Right ventricle myocardium inferior (tissue), 1 donor: ENCODE measurements at regions of chr10 and their contacts with region 1.

Region 1: GRCh38 chr10:102132563-102133372 is at the start of gene PPRC1:
- DNase-seq: peak; percentile 100
- ATAC-seq: peak; percentile 97
- total RNA-seq, gene PPRC1: 14.3 TPM

Region 2: DNA sequence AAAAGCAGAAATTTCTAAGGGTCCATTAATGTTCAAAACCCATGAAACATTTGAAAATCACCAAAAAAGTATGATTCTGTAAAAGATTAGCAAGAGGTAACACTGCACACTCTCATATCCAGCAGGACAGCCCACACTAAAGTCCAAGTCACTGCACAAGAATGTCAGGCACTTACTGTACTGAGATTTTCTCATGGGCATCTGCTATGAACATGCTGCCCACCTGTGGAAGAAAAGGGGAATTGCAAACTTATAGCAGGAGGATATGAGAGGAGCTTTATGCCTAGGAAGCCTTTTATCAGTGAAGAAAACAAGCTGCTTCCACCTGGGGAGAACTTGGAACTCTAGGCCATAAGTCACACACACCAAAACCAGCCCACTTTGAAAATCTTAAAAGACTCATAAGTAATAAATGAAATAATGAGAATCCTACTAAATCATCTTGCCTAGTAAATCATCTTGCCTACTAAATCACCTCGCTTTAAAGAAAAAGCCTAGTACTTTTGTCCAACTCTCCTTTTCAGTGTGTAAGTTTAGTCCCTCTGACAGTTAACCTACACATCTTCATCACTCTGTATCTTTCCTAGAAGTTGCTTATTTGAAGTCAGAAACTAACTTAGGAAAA is 122.9 kb before region 1 on chr10:
- intact Hi-C with region 1: no loop called
- DNase-seq: no peak
- ATAC-seq: peak; percentile 91

Region 3: GRCh38 chr10:102090772-102091171 is 42.0 kb before region 1 on chr10:
- intact Hi-C with region 1: no loop called
- DNase-seq: no peak
- ATAC-seq: no peak

Region 4: GRCh38 chr10:102151774-102152544 is 19.2 kb after region 1 on chr10 and contains the start of gene NOLC1:
- intact Hi-C with region 1: loop called (anchors 1 kb)
- DNase-seq: peak; percentile 99
- ATAC-seq: peak; percentile 99
- total RNA-seq, gene NOLC1: 25.8 TPM

Region 5: GRCh38 chr10:102175415-102175814 is 42.6 kb after region 1 on chr10:
- intact Hi-C with region 1: no loop called
- DNase-seq: no peak
- ATAC-seq: no peak

Region 6: GRCh38 chr10:102503281-102504220 is 370.8 kb after region 1 on chr10 and contains the start of gene SUFU:
- intact Hi-C with region 1: no loop called
- DNase-seq: peak; percentile 97
- ATAC-seq: peak; percentile 85
- total RNA-seq, gene SUFU: 7.8 TPM